ENCODE measurements at regions of chr2 and their contacts with region 1.

Region 1: GRCh38 chr2:52558265-52558664 is 1209.3 kb upstream of the CHAC2 start:
- DNase-seq: no peak
- ATAC-seq: no peak
- H3K4me3 ChIP-seq: no peak overlapping the region
- H3K27ac ChIP-seq: no peak overlapping the region
- H3K4me1 ChIP-seq: no peaks in the 10 kb centered on the region
- H3K27me3 ChIP-seq: no peaks in the 10 kb centered on the region
- CTCF ChIP-seq: no peak

Region 2: GRCh38 chr2:51263951-51264350 is 1294.3 kb before region 1 on chr2:
- intact Hi-C with region 1: no loop called
- DNase-seq: no peak
- ATAC-seq: no peak
- H3K4me3 ChIP-seq: no peak overlapping the region
- H3K27ac ChIP-seq: no peak overlapping the region
- H3K4me1 ChIP-seq: no peaks in the 10 kb centered on the region
- H3K27me3 ChIP-seq: no peaks in the 10 kb centered on the region
- CTCF ChIP-seq: no peak

Region 3: GRCh38 chr2:52518678-52519077 is 39.6 kb before region 1 on chr2:
- intact Hi-C with region 1: loop called in 3 of 10 experiments (anchors 1 to 2 kb)
- DNase-seq: no peak
- ATAC-seq: no peak
- H3K4me3 ChIP-seq: no peak overlapping the region
- H3K27ac ChIP-seq: no peak overlapping the region
- H3K4me1 ChIP-seq: no peaks in the 10 kb centered on the region
- H3K27me3 ChIP-seq: no peaks in the 10 kb centered on the region
- CTCF ChIP-seq: no peak